PC-9 (cell line): ENCODE measurements at regions of chr14 and their contacts with region 1.

Region 1: DNA sequence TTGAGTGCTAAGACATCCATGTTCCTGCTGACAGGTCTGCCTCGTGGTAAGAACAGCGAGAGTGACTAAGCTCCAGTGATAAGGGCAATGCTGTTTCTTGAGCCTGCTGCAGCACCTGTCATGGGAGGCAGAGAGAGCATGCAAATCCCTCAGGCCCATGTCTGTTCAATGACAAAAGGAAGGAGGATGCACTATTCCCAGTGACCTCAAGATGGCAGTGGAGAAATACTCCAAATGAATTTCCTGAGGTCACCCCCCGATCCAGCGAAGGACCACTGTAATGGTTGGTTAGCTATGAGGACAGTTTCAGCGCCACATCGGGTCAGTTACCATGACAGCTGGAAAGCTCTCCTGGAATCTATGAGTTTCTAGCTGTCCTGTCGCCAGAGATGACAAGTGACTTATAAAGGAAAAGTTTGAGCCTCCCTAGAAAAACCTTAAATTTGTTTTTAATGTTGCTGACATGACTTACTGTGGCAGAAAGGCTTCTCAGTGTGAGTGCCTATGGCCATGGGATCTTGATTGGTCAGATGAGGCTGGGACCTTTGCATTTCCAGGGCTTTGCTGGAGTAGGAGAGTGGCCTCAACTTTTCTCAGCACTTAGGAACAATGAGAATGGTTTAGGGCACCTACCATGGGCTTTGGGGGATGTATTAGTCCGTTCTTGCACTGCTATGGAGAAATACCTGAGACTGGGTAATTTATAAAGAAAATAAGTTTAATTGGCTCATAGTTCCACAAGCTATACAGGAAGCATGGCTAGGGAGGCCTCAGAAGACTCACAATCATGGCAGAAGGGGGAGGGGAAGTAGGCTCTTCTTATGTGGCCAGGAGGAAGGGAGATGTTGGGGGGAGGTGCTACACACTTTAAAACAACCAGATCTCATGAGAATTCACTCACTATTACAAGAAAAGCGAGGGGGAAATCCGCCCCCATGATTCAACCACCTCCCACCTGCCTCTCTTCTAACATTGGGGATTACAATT is 88.0 kb upstream of the TMEM260 start:
- DNase-seq: peak; percentile 27 to 38
- H3K4me3 ChIP-seq: no peak overlapping the region; the same call in 1 of the 2 replicates
- H3K27ac ChIP-seq: no peak overlapping the region
- H3K4me1 ChIP-seq: no peaks in the 10 kb centered on the region
- H3K27me3 ChIP-seq: no peaks in the 10 kb centered on the region
- CTCF ChIP-seq: peak; percentile 78

Region 2: DNA sequence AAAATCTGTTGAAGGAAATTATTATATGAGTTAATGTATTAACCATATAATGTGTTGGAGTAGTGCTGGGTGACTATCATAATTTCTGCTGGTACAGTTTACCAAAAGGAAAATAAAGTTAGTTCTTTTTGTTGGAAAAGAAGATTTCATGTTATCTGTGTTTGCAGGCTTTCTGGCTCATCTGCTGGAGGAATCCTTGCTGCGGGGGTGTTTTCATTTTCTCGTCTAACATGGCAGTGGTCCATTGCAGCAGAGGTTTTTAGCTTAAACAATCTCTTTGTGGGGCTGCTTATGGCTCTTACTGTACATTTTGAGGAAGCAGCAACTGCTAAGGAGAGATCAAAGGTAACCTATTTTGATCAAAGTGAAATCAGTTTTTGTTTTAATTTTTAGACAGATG is 112.1 kb after region 1 on chr14:
- CTCF ChIA-PET with region 1: no interaction called
- POLR2A ChIA-PET with region 1: no interaction called
- intact Hi-C with region 1: no loop called
- DNase-seq: no peak
- H3K4me3 ChIP-seq: no peak overlapping the region
- H3K27ac ChIP-seq: no peak overlapping the region
- H3K4me1 ChIP-seq: 0 out of 2 replicates have a peak, but pooled peaks cover 2% of the 10 kb centered on the region
- H3K27me3 ChIP-seq: no peaks in the 10 kb centered on the region
- CTCF ChIP-seq: no peak

Region 3: GRCh38 chr14:56659964-56660551 is 168.5 kb after region 1 on chr14:
- CTCF ChIA-PET with region 1: no interaction called
- POLR2A ChIA-PET with region 1: no interaction called
- intact Hi-C with region 1: no loop called
- DNase-seq: peak; percentile 1 to 71
- H3K4me3 ChIP-seq: no peak overlapping the region
- H3K27ac ChIP-seq: no peak overlapping the region
- H3K4me1 ChIP-seq: no peaks in the 10 kb centered on the region
- H3K27me3 ChIP-seq: no peaks in the 10 kb centered on the region
- CTCF ChIP-seq: peak; percentile 82

Region 4: GRCh38 chr14:57382283-57382682 is 890.7 kb after region 1 on chr14:
- CTCF ChIA-PET with region 1: no interaction called
- POLR2A ChIA-PET with region 1: no interaction called
- intact Hi-C with region 1: loop called (anchors 2 kb)
- DNase-seq: peak in 1 of 2 experiments; percentile 37
- H3K4me3 ChIP-seq: no peak overlapping the region
- H3K27ac ChIP-seq: no peak overlapping the region
- H3K4me1 ChIP-seq: peaks cover 21% of the 10 kb centered on the region
- H3K27me3 ChIP-seq: no peaks in the 10 kb centered on the region
- CTCF ChIP-seq: no peak